ENCODE measurements at regions of chr5 and their contacts with region 1.

Region 1: GRCh38 chr5:69093771-69094482 is at the start of gene SLC30A5:
- DNase-seq: peak; percentile 100
- H3K4me3 Mint-ChIP-seq: peak within 1 kb of the TSS; percentile 94
- H3K27ac Mint-ChIP-seq: peak within 1 kb of the TSS; percentile 97
- H3K4me1 Mint-ChIP-seq: peaks cover 27% of the 10 kb centered on the region
- H3K27me3 Mint-ChIP-seq: no peaks in the 10 kb centered on the region
- total RNA-seq, gene SLC30A5: 60.2 and 65.4 TPM in 2 replicates

Region 2: GRCh38 chr5:69042915-69043658 is 50.8 kb before region 1 on chr5:
- intact Hi-C with region 1: loop called (anchors 2 kb)
- DNase-seq: peak; percentile 94
- H3K4me3 Mint-ChIP-seq: peak overlapping the region; percentile 93
- H3K27ac Mint-ChIP-seq: peak overlapping the region; percentile 87
- H3K4me1 Mint-ChIP-seq: peaks cover 10% of the 10 kb centered on the region
- H3K27me3 Mint-ChIP-seq: no peaks in the 10 kb centered on the region

Region 3: GRCh38 chr5:69189162-69190086 is 95.5 kb after region 1 on chr5 and contains the start of gene CENPH:
- intact Hi-C with region 1: loop called (anchors 1 kb)
- DNase-seq: peak; percentile 99
- H3K4me3 Mint-ChIP-seq: peak within 1 kb of the TSS; percentile 95
- H3K27ac Mint-ChIP-seq: peak within 1 kb of the TSS; percentile 97
- H3K4me1 Mint-ChIP-seq: peaks cover 8% of the 10 kb centered on the region
- H3K27me3 Mint-ChIP-seq: no peaks in the 10 kb centered on the region
- total RNA-seq, gene CENPH: 40.7 and 42.4 TPM in 2 replicates

Region 4: DNA sequence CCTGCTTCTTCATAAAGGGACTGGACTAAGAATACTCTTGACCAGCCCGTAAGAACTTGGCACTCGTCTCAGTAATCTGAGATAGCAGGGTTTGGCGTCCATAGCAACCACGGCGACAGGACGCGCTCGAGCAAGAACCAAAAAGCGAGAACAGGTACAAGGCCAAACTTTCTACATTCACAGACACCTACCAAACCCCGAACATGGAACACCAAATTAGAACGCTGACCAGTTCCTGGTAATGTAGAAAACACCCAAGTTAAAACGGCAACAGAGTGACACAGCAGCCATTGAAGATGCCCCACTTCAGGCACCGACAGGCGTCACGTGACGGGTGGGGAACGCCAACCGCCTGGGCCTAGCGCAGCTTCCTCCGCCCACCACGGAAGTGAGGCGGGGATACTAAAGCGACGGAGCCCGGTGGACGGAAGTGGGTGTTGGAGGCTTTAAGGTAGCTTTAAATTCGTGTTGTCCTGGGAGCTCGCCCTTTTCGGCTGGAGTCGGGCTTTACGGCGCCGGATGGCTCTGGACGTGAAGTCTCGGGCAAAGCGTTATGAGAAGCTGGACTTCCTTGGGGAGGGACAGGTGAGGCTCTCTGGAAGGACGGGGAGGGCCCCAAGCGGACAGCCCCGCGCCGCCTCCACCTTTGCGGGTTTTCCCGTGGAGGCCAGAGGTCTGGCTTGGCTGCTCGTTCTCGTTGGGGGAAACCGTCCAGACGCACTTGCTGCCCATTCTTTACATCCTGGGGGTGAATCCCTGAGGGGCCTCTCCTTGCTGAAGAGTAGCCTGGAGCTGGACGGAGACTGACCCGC is 140.7 kb after region 1 on chr5 and contains the start of gene CDK7:
- intact Hi-C with region 1: loop called (anchors 1 kb)
- DNase-seq: peak; percentile 98
- H3K4me3 Mint-ChIP-seq: peak within 1 kb of the TSS; percentile 97
- H3K27ac Mint-ChIP-seq: peak within 1 kb of the TSS; percentile 86
- H3K4me1 Mint-ChIP-seq: peaks cover 28% of the 10 kb centered on the region
- H3K27me3 Mint-ChIP-seq: no peaks in the 10 kb centered on the region
- total RNA-seq, gene CDK7: 45.6 and 54.2 TPM in 2 replicates

Region 5: GRCh38 chr5:69369369-69370121 is 275.6 kb after region 1 on chr5 and contains the starts of genes AK6, RAD17 and TAF9:
- intact Hi-C with region 1: loop called (anchors 1 kb)
- DNase-seq: peak; percentile 97
- H3K4me3 Mint-ChIP-seq: peak within 1 kb of the TSS; percentile 95
- H3K27ac Mint-ChIP-seq: peak within 1 kb of the TSS; percentile 97
- H3K4me1 Mint-ChIP-seq: peaks cover 29% of the 10 kb centered on the region
- H3K27me3 Mint-ChIP-seq: no peaks in the 10 kb centered on the region
- total RNA-seq, gene AK6: 66.7 and 67.0 TPM in 2 replicates
- total RNA-seq, gene RAD17: 22.7 and 26.8 TPM in 2 replicates
- total RNA-seq, gene TAF9: 63.0 and 65.0 TPM in 2 replicates